Naive thymus-derived CD4-positive, alpha-beta T cell (primary cell): ENCODE measurements at regions of chr6 and their contacts with region 1.

Region 1: GRCh38 chr6:161111261-161111660 is 119.7 kb downstream of the MAP3K4 start:
- DNase-seq: peak in 5 of 9 donors; percentile 29 to 54 (median 42)
- ATAC-seq: peak; percentile 82
- H3K4me3 ChIP-seq: no peak overlapping the region
- H3K4me3 Mint-ChIP-seq: peak overlapping the region in 8 of 10 donors; percentile 17 to 76 (median 50)
- H3K27ac ChIP-seq: peak overlapping the region; percentile 22
- H3K27ac Mint-ChIP-seq: peak overlapping the region; percentile 28 to 90 (median 86)
- H3K4me1 ChIP-seq: peaks cover 0 to 6% of the 10 kb centered on the region in 2 donors
- H3K4me1 Mint-ChIP-seq: peaks cover 2 to 27% (median 21%) of the 10 kb centered on the region in 7 donors
- H3K27me3 ChIP-seq: no peaks in the 10 kb centered on the region
- H3K27me3 Mint-ChIP-seq: no peaks in the 10 kb centered on the region

Region 2: DNA sequence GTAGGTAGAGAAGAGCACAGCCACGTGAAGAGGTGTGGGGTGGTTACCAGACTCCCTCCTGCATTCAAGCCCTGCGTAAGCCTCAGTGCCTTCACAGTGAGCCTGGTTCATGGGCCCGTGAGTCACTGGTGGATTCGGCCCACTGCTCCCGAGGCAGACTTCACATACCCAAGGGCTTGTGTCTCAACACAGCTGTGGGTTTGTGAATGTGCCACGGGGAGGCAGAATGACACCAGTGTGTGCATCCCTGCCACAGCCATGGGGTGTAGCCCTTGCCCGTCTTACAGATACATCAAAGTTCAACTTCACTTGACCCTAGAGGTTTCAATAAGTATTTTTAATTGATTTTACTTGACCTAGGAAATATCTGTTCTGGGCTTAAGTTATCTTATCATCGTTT is 11.2 kb before region 1 on chr6:
- CTCF ChIA-PET with region 1: no interaction called
- POLR2A ChIA-PET with region 1: no interaction called
- intact Hi-C with region 1: no loop called
- DNase-seq: no peak
- ATAC-seq: no peak
- H3K4me3 ChIP-seq: no peak overlapping the region
- H3K4me3 Mint-ChIP-seq: no peak overlapping the region
- H3K27ac ChIP-seq: no peak overlapping the region
- H3K27ac Mint-ChIP-seq: no peak overlapping the region
- H3K4me1 ChIP-seq: no peaks in the 10 kb centered on the region
- H3K4me1 Mint-ChIP-seq: no peaks in the 10 kb centered on the region
- H3K27me3 ChIP-seq: no peaks in the 10 kb centered on the region
- H3K27me3 Mint-ChIP-seq: no peaks in the 10 kb centered on the region

Region 3: GRCh38 chr6:161128680-161129196 is 17.5 kb after region 1 on chr6:
- CTCF ChIA-PET with region 1: no interaction called
- POLR2A ChIA-PET with region 1: no interaction called
- intact Hi-C with region 1: loop called in 1 of 2 experiments (anchors 2 kb)
- DNase-seq: no peak
- ATAC-seq: peak; percentile 37
- H3K4me3 ChIP-seq: no peak overlapping the region
- H3K4me3 Mint-ChIP-seq: peak overlapping the region in 2 of 10 donors; percentile 14 to 24
- H3K27ac ChIP-seq: no peak overlapping the region
- H3K27ac Mint-ChIP-seq: peak overlapping the region; percentile 4 to 70 (median 31)
- H3K4me1 ChIP-seq: no peaks in the 10 kb centered on the region
- H3K4me1 Mint-ChIP-seq: peaks cover 9 to 33% (median 19%) of the 10 kb centered on the region in 7 donors
- H3K27me3 ChIP-seq: no peaks in the 10 kb centered on the region
- H3K27me3 Mint-ChIP-seq: no peaks in the 10 kb centered on the region

Region 4: DNA sequence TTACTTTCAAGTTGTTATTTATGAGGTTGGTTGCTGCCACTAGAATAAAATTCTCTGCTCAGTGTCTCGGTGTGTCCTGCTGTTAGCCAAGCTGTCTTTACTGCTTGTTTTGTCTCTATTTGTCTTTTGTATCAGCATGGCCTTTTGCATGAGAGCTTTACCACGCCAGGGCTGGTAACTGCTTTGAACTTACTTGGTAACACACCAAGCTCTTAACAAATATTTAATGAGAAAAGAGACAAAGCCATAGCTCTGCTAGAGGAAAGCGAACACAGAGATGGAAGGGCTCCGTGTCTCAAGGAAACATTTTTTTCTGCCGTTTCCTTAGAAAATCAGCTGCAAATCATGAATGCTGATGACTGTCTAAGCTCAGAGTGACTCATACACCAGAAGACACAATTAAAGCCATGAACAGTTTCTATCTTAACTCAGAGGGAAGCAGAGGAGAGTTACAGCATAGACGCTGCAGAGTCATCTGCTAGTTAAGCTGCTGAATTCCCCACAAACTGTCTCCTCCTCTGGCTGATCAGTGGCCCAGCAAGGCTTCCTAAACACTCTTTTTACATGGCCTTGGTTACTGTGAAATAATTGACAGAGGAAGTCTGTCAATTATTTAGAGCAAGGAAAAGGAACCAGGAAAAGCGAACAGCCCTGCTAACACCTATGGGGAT is 117.8 kb after region 1 on chr6:
- CTCF ChIA-PET with region 1: no interaction called
- POLR2A ChIA-PET with region 1: no interaction called
- intact Hi-C with region 1: loop called in 1 of 2 experiments (anchors 10 kb)
- DNase-seq: no peak
- ATAC-seq: peak; percentile 40
- H3K4me3 ChIP-seq: no peak overlapping the region
- H3K4me3 Mint-ChIP-seq: peak overlapping the region in 1 of 10 donors; percentile 76
- H3K27ac ChIP-seq: no peak overlapping the region
- H3K27ac Mint-ChIP-seq: peak overlapping the region in 1 of 9 donors; percentile 90
- H3K4me1 ChIP-seq: peaks cover 0 to 16% of the 10 kb centered on the region in 2 donors
- H3K4me1 Mint-ChIP-seq: peaks cover 9 to 56% (median 25%) of the 10 kb centered on the region in 7 donors
- H3K27me3 ChIP-seq: no peaks in the 10 kb centered on the region
- H3K27me3 Mint-ChIP-seq: no peaks in the 10 kb centered on the region